Activated B cell treated with CpG ODN at 0.5 μM for 24 hours (primary cell): ENCODE measurements at regions of chr5 and their contacts with region 1.

Region 1: GRCh38 chr5:31809050-31809870 is 170.3 kb downstream of the PDZD2 start:
- DNase-seq: no peak
- ATAC-seq: no peak
- H3K4me3 Mint-ChIP-seq: no peak overlapping the region
- H3K27ac Mint-ChIP-seq: no peak overlapping the region
- H3K4me1 Mint-ChIP-seq: no peaks in the 10 kb centered on the region
- H3K27me3 Mint-ChIP-seq: peaks cover 6% of the 10 kb centered on the region
- CTCF ChIP-seq: no peak

Region 2: GRCh38 chr5:32076699-32077695 is 267.7 kb after region 1 on chr5:
- CTCF ChIA-PET with region 1: no interaction called
- POLR2A ChIA-PET with region 1: no interaction called
- intact Hi-C with region 1: loop called (anchors 5 kb)
- DNase-seq: no peak
- ATAC-seq: no peak
- H3K4me3 Mint-ChIP-seq: no peak overlapping the region
- H3K27ac Mint-ChIP-seq: no peak overlapping the region
- H3K4me1 Mint-ChIP-seq: no peaks in the 10 kb centered on the region
- H3K27me3 Mint-ChIP-seq: no peaks in the 10 kb centered on the region
- CTCF ChIP-seq: no peak